ENCODE measurements at regions of chr14 and their contacts with region 1.

Region 1: DNA sequence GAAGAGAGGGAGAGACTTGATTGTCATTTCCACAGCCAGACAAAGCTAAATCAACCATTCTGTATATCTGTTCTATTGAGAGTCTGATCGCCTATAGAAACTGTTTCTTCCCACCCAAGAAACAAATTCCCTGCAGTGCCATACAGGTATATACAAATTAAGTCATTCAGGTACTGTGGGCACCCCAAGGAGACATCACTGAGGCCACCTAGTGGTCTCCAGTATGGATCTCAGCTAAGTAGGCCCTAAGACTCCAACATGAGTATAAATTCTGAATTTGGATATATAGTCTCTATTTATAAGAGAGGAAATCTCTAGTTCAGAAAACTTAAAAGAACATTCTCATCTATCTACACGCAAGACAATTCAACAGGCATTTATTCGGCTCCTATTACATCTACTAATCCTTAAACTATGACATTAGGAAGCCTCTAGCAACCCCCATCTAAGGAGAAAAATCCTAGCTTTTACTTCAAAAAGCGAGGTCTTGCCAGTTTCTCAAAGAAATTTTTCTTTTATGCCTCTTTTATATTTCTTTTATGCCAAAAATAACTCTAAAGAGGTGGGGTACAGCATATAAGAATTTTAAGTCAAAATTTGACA is 62.6 kb downstream of the DCAF5 start:
- DNase-seq: no peak
- H3K4me3 ChIP-seq: no peak overlapping the region
- H3K27ac ChIP-seq: peak overlapping the region in 1 of 4 donors; percentile 76
- H3K4me1 ChIP-seq: peaks cover 8 to 48% (median 11%) of the 10 kb centered on the region in 3 donors
- H3K27me3 ChIP-seq: no peaks in the 10 kb centered on the region
- CTCF ChIP-seq: peak in 5 of 6 experiments; percentile 47 to 73 (median 55)
- POLR2A ChIP-seq: no peak

Region 2: GRCh38 chr14:68911594-68912227 is 178.6 kb before region 1 on chr14:
- intact Hi-C with region 1: loop called (anchors 5 kb)
- DNase-seq: no peak
- H3K4me3 ChIP-seq: no peak overlapping the region
- H3K27ac ChIP-seq: peak overlapping the region in 3 of 4 donors; percentile 45 to 63 (median 62)
- H3K4me1 ChIP-seq: peaks cover 0 to 19% (median 4%) of the 10 kb centered on the region in 3 donors
- H3K27me3 ChIP-seq: no peaks in the 10 kb centered on the region
- CTCF ChIP-seq: peak; percentile 90 to 98 (median 94)
- POLR2A ChIP-seq: no peak